Lower leg skin (tissue), 4 donors: ENCODE measurements at regions of chr1 and their contacts with region 1.

Region 1: GRCh38 chr1:19081218-19081893 is 124.9 kb upstream of the IFFO2 start:
- DNase-seq: peak; percentile 81 to 91
- H3K4me3 ChIP-seq: peak overlapping the region; percentile 7
- CTCF ChIP-seq: no peak
- POLR2A ChIP-seq: no peak

Region 2: GRCh38 chr1:18949686-18950400 is 131.5 kb before region 1 on chr1:
- intact Hi-C with region 1: loop called (anchors 5 kb)
- DNase-seq: peak in 1 of 2 donors; percentile 92
- H3K4me3 ChIP-seq: peak overlapping the region; percentile 1
- CTCF ChIP-seq: no peak
- POLR2A ChIP-seq: no peak